ENCODE measurements at regions of chr13 and their contacts with region 1.

Region 1: GRCh38 chr13:37640499-37640898 is 41.9 kb upstream of the POSTN start:
- DNase-seq: peak; percentile 55
- H3K4me3 ChIP-seq: no peak overlapping the region
- H3K27ac ChIP-seq: no peak overlapping the region
- H3K27me3 ChIP-seq: no peaks in the 10 kb centered on the region
- CTCF ChIP-seq: peak; percentile 76

Region 2: GRCh38 chr13:37446503-37446902 is 194.0 kb before region 1 on chr13:
- CTCF ChIA-PET with region 1: no interaction called
- POLR2A ChIA-PET with region 1: no interaction called
- DNase-seq: peak; percentile 70
- H3K4me3 ChIP-seq: no peak overlapping the region
- H3K27ac ChIP-seq: no peak overlapping the region
- H3K27me3 ChIP-seq: no peaks in the 10 kb centered on the region
- CTCF ChIP-seq: no peak

Region 3: GRCh38 chr13:37656247-37656940 is 15.9 kb after region 1 on chr13:
- CTCF ChIA-PET with region 1: interaction called, 12 read pairs
- POLR2A ChIA-PET with region 1: no interaction called
- DNase-seq: peak; percentile 89
- H3K4me3 ChIP-seq: no peak overlapping the region
- H3K27ac ChIP-seq: peak overlapping the region; percentile 89
- H3K27me3 ChIP-seq: no peaks in the 10 kb centered on the region
- CTCF ChIP-seq: no peak

Region 4: GRCh38 chr13:37869756-37870488 is 229.4 kb after region 1 on chr13 and contains the start of gene TRPC4:
- CTCF ChIA-PET with region 1: interaction called, 19 read pairs
- POLR2A ChIA-PET with region 1: no interaction called
- DNase-seq: no peak
- H3K4me3 ChIP-seq: peak within 1 kb of the TSS; percentile 76
- H3K27ac ChIP-seq: no peak within 1 kb of the TSS
- H3K27me3 ChIP-seq: no peaks in the 10 kb centered on the region
- CTCF ChIP-seq: peak; percentile 51
- polyA plus RNA-seq, gene TRPC4: 1.4 and 1.8 TPM in 2 replicates

Region 5: DNA sequence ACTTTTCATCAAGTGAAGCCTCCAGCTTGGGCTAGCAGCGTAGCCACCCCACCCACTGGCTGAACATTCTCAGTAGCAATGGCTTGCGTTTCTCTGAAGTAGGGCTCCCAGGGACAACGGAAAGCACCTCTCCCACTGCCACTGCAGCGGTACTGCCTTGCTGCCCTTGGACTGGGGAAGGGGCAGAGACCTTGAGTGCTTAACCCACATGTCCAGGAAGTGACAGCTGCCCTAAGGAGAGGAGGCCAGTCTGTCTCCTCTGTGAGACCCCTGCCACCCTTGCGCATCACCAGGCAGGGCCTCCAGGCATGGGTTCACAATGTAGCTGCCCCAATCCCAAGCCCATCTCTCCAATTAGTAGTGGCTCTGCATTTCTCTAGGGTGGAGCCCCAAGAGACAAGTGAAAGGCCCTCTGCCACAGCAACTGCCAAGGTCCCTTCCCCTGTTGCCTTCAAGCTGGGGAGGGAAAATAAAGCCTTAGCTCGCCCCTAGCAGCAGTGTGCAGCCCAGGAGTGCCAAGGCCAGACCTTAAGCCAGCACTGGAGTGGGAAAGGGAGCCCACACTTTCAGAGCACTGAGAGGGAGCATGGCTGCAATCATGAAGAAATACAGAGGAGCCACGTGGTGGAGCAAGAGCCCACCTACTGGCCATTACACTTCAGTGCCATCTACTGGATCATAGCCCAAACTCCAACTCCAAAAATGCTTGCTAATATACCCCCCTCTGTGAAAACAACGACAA is 405.0 kb after region 1 on chr13:
- CTCF ChIA-PET with region 1: interaction called, 35 read pairs
- POLR2A ChIA-PET with region 1: no interaction called
- DNase-seq: no peak
- H3K4me3 ChIP-seq: no peak overlapping the region
- H3K27ac ChIP-seq: no peak overlapping the region
- H3K27me3 ChIP-seq: no peaks in the 10 kb centered on the region
- CTCF ChIP-seq: peak; percentile 73

Region 6: GRCh38 chr13:38582133-38582532 is 941.6 kb after region 1 on chr13:
- CTCF ChIA-PET with region 1: interaction called, 14 read pairs
- POLR2A ChIA-PET with region 1: no interaction called
- DNase-seq: no peak
- H3K4me3 ChIP-seq: no peak overlapping the region
- H3K27ac ChIP-seq: no peak overlapping the region
- H3K27me3 ChIP-seq: peaks cover 2% of the 10 kb centered on the region
- CTCF ChIP-seq: peak; percentile 44

Measured in AG04450 (cell line).